Heart right ventricle (tissue), 16 donors: ENCODE measurements at regions of chr2 and their contacts with region 1.

Region 1: DNA sequence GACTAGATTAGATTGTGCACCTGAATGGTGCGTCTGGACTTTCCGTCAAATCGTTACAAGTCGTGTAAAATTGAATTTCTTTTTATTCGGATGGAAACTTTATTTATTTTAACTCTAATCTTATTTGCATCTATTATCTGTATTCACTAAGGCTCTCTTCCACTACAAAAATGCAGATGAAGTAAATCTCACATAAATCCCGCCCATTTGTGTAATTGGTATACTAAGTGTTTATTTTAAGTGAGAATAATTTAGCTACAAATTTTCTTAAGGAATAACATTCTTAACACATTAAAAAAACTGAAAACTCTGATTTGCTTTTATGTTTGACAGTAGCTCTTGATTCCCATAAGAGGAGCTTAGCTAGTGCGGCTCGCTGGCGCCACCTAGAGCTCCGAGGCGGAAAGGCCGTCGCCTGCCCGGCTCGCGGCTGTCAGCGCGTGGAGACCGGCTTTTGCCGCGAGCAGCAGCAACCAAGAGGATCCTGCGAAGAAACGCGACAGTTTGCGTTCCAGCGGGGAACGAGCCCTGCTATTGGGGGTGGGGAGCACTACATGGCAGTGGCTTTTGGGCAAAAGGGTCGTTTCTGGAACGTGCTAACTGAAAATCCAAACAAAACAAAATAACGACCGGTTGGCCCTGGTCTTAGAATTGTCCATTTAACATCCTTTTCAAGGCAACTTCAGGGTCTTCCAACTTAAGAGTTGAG is 6.7 kb downstream of the SP9 start:
- DNase-seq: peak; percentile 83 to 90
- ATAC-seq: peak; percentile 82 to 98 (median 91)
- H3K4me3 ChIP-seq: peak overlapping the region in 3 of 10 donors; percentile 1 to 20 (median 2)
- H3K27ac ChIP-seq: no peak overlapping the region
- H3K4me1 ChIP-seq: peaks cover 23 to 69% (median 34%) of the 10 kb centered on the region in 9 donors
- H3K27me3 ChIP-seq: peaks cover 45 to 100% (median 88%) of the 10 kb centered on the region in 7 donors
- CTCF ChIP-seq: peak; percentile 84 to 99 (median 98)

Region 2: GRCh38 chr2:173571021-173571882 is 770.2 kb before region 1 on chr2:
- intact Hi-C with region 1: loop called in 3 of 10 experiments (anchors 5 to 10 kb)
- DNase-seq: no peak
- ATAC-seq: peak in 4 of 8 donors; percentile 35 to 69 (median 41)
- H3K4me3 ChIP-seq: peak overlapping the region in 1 of 10 donors; percentile 3
- H3K27ac ChIP-seq: no peak overlapping the region
- H3K4me1 ChIP-seq: peaks cover 0 to 16% (median 6%) of the 10 kb centered on the region in 9 donors
- H3K27me3 ChIP-seq: peaks cover 0 to 14% (median 0%) of the 10 kb centered on the region in 7 donors
- CTCF ChIP-seq: peak in 7 of 9 donors; percentile 6 to 55 (median 49)

Region 3: GRCh38 chr2:173884025-173884802 is 457.2 kb before region 1 on chr2:
- intact Hi-C with region 1: loop called in 5 of 10 experiments (anchors 5 to 10 kb)
- DNase-seq: peak; percentile 47 to 48
- ATAC-seq: peak in 7 of 8 donors; percentile 42 to 81 (median 70)
- H3K4me3 ChIP-seq: no peak overlapping the region
- H3K27ac ChIP-seq: no peak overlapping the region
- H3K4me1 ChIP-seq: peaks cover 0 to 14% (median 6%) of the 10 kb centered on the region in 9 donors
- H3K27me3 ChIP-seq: peaks cover 0 to 3% (median 0%) of the 10 kb centered on the region in 7 donors
- CTCF ChIP-seq: peak; percentile 28 to 80 (median 70)

Region 4: GRCh38 chr2:174158003-174158402 is 183.4 kb before region 1 on chr2:
- intact Hi-C with region 1: loop called in 5 of 10 experiments (anchors 5 to 10 kb)
- DNase-seq: peak in 1 of 2 donors; percentile 7
- ATAC-seq: no peak
- H3K4me3 ChIP-seq: no peak overlapping the region
- H3K27ac ChIP-seq: no peak overlapping the region
- H3K4me1 ChIP-seq: peaks cover 0 to 13% (median 0%) of the 10 kb centered on the region in 9 donors
- H3K27me3 ChIP-seq: no peaks in the 10 kb centered on the region
- CTCF ChIP-seq: peak in 8 of 9 donors; percentile 6 to 55 (median 42)

Region 5: DNA sequence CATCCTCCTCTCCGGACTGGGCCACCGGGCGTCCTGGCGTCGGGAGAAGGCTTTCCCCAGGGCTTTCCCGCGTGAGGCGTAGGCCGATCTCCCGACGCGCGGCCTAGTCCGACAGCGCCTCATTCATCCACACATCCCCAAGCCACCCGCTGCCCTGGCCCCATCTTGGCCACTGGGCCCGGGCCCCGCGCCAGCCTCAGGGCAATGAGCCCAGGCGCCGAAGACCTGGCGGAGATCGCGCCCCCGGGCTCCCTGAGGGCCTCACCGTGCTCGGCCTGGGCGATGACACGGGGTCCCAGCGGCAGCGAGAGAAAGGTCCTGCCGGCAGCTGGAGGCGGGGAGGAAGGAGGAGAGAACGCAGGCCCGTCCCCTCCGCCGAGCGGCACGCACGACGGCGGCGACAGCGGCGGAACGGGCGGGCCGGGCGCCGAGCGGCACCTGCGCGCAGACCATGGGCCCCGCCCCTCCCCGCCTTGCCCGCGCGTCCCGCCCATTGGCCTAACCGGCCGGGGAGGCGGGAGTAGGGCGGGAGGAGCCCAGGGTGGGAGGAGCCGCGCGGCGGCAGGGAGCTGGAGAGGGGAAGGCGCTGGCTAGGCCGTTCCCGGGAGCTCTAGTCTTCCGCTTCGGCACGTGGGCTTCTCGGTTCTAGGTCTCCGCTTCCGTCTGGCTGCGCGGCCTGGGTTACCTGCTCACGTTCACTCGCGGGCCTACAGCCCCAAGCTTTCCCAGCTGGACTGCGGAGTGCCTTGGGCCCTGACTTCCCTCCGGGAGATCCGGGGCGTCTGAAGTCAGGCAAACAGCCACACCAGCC is 93.0 kb before region 1 on chr2 and contains the start of gene OLA1:
- intact Hi-C with region 1: loop called in 1 of 10 experiments (anchors 10 kb)
- DNase-seq: peak; percentile 93 to 96
- ATAC-seq: peak; percentile 100
- H3K4me3 ChIP-seq: peak within 1 kb of the TSS; percentile 64 to 94 (median 80)
- H3K27ac ChIP-seq: peak within 1 kb of the TSS in 9 of 10 donors; percentile 77 to 94 (median 83)
- H3K4me1 ChIP-seq: peaks cover 0 to 27% (median 20%) of the 10 kb centered on the region in 9 donors
- H3K27me3 ChIP-seq: no peaks in the 10 kb centered on the region
- CTCF ChIP-seq: peak in 3 of 9 donors; percentile 8 to 21 (median 12)
- total RNA-seq, gene OLA1: 64.5 to 85.2 (median 73.3) TPM

Region 6: DNA sequence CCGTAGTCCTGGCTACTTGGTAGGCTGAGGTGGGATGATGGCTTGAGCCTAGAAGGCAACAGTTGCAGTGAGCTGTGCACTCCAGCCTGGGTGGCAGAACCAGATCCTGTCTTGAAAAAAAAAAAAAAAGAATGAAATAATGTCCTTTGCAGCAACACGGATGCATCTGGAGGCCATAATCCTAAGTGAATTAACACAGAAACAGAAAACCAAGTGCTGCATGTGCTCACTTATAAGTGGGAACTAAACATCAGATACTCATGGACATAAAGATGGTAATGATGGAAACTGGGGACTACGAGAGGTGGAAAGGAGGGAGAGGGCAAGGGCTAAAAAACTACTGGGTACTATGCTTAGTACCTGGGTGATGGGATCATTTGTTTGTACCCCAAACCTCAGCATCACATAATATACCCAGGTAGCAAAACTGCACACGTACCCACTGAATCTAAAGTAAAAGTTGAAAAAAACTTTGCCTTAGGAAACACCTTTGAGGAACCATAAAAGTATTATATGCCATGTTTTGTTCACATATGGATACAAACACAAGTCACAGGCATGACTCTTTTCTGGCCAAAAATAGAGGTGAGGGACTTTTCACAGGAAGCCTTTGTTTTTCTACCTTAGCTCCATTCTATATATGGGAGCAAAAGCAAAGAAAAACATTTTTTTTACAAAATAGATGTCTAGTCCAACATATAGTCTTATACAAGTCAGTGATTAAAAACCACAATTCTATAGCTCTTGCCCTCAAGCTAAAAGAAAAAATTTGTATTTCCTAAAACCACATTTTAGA is 108.8 kb after region 1 on chr2:
- intact Hi-C with region 1: no loop called
- DNase-seq: no peak
- ATAC-seq: no peak
- H3K4me3 ChIP-seq: no peak overlapping the region
- H3K27ac ChIP-seq: no peak overlapping the region
- H3K4me1 ChIP-seq: no peaks in the 10 kb centered on the region
- H3K27me3 ChIP-seq: no peaks in the 10 kb centered on the region
- CTCF ChIP-seq: no peak